ENCODE measurements at regions of chr2 and their contacts with region 1.

Region 1: GRCh38 chr2:71460595-71461303 is 7.4 kb downstream of the DYSF start:
- DNase-seq: no peak
- H3K4me3 ChIP-seq: no peak overlapping the region
- H3K27ac ChIP-seq: no peak overlapping the region
- H3K4me1 ChIP-seq: peaks cover 26% of the 10 kb centered on the region
- H3K27me3 ChIP-seq: no peaks in the 10 kb centered on the region
- CTCF ChIP-seq: peak; percentile 48 to 62

Region 2: DNA sequence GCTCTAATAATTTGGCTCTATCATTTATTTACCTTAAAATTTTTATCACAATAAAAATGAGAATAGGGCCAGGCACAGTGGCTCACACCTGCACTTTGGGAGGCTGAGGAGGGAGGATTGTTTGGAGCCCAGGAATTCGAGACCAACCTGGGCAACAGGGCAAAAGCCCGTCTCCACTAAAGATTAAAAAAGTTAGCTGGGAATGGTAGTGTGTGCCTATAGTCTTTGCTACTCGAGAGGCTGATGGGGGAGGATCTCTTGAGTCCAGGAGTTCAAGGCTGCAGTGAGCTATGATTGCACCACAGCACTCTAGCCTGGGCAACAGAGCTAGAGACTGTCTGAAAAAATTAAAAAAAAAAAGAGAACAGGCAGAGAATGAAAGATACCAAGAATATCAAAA is 324.6 kb before region 1 on chr2:
- CTCF ChIA-PET with region 1: no interaction called
- dilution Hi-C with region 1: no loop called
- in situ Hi-C with region 1: no loop called
- intact Hi-C with region 1: no loop called
- DNase-seq: no peak
- H3K4me3 ChIP-seq: no peak overlapping the region
- H3K27ac ChIP-seq: no peak overlapping the region
- H3K4me1 ChIP-seq: peaks cover 4% of the 10 kb centered on the region
- H3K27me3 ChIP-seq: no peaks in the 10 kb centered on the region
- CTCF ChIP-seq: no peak

Region 3: DNA sequence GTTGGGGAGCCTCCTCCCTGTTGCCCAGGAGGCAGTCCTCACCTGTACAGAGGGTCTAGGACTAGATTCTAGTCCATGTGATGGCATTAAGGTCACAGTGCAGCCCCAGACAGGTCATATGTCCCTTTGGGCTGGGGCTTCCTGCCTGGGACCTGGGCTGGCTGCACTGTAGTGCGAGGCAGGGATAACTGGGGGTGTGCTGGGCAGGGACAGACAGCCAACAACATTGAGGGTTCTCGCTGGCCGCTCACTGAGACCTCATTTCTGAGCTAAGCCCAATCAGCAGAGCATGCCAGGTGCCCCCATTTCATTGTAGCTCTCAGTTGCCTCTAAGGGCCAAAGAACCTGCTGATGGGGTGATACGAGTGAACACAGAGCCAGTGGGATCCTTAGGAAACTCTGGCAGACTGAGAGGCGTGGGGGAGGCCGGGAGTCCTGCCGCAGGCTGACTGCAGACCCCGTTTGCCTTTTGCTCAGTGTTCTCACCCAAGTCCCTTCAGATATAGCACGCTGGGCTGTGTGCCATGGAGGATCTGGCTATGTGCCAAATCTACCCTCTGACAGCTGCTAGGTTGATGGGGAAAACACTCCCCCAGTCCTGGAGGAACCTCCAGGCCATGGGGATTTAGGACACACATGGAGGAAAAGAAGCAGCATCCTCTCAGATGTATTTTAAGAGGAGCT is 44.5 kb after region 1 on chr2:
- CTCF ChIA-PET with region 1: interaction called, 23 read pairs
- dilution Hi-C with region 1: no loop called
- in situ Hi-C with region 1: loop called (anchors 5 kb)
- intact Hi-C with region 1: loop called (anchors 1 kb)
- DNase-seq: no peak
- H3K4me3 ChIP-seq: no peak overlapping the region
- H3K27ac ChIP-seq: no peak overlapping the region
- H3K4me1 ChIP-seq: peaks cover 5% of the 10 kb centered on the region
- H3K27me3 ChIP-seq: no peaks in the 10 kb centered on the region
- CTCF ChIP-seq: no peak

Region 4: GRCh38 chr2:71530641-71531332 is 70.0 kb after region 1 on chr2:
- CTCF ChIA-PET with region 1: no interaction called
- dilution Hi-C with region 1: loop called (anchors 5 kb)
- in situ Hi-C with region 1: no loop called
- intact Hi-C with region 1: no loop called
- DNase-seq: peak; percentile 24
- H3K4me3 ChIP-seq: no peak overlapping the region
- H3K27ac ChIP-seq: no peak overlapping the region
- H3K4me1 ChIP-seq: peaks cover 14% of the 10 kb centered on the region
- H3K27me3 ChIP-seq: no peaks in the 10 kb centered on the region
- CTCF ChIP-seq: peak; percentile 74 to 76

Region 5: GRCh38 chr2:71637168-71637567 is 176.4 kb after region 1 on chr2:
- CTCF ChIA-PET with region 1: no interaction called
- dilution Hi-C with region 1: no loop called
- in situ Hi-C with region 1: no loop called
- intact Hi-C with region 1: no loop called
- DNase-seq: no peak
- H3K4me3 ChIP-seq: no peak overlapping the region
- H3K27ac ChIP-seq: no peak overlapping the region
- H3K4me1 ChIP-seq: no peaks in the 10 kb centered on the region
- H3K27me3 ChIP-seq: peaks cover 3% of the 10 kb centered on the region
- CTCF ChIP-seq: no peak

Measured in mammary epithelial cell (primary cell).